Calu3 (cell line): ENCODE measurements at regions of chr11 and their contacts with region 1.

Region 1: GRCh38 chr11:41461057-41461681 is 1.7 kb upstream of the LRRC4C start:
- DNase-seq: no peak
- H3K4me3 Mint-ChIP-seq: no peak overlapping the region
- H3K27ac Mint-ChIP-seq: no peak overlapping the region
- H3K4me1 Mint-ChIP-seq: no peaks in the 10 kb centered on the region
- H3K27me3 Mint-ChIP-seq: peaks cover 8% of the 10 kb centered on the region
- CTCF ChIP-seq: peak; percentile 63

Region 2: DNA sequence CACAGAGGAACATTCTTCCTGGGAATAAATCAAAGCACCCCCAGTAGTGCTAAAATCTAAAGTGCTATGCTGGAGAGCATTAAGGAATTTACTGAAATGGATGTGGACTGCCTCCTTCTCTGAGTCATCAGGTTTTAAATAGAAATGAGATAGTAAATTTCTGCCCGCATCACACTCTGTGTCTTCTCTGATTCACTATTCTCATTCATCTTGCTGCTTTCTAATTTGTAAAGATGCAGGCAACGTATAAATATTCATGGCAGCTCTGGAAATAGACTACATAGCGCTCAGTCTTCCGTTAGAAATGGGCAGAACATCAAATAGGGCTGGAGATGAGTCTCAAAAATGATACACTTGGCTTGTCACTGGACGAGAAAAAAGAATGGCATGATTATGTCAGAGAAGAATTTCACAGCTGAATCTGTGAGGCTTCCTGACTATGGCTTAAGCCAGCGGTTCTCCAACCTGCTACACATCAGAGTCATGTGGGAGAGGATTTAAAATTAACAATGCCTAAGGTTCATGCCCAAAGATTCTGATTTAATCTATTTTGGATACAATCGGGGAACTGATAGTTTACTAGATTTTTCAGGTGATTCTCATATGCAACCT is 179.9 kb before region 1 on chr11:
- CTCF ChIA-PET with region 1: no interaction called
- intact Hi-C with region 1: no loop called
- DNase-seq: no peak
- H3K4me3 Mint-ChIP-seq: no peak overlapping the region
- H3K27ac Mint-ChIP-seq: no peak overlapping the region
- H3K4me1 Mint-ChIP-seq: no peaks in the 10 kb centered on the region
- H3K27me3 Mint-ChIP-seq: no peaks in the 10 kb centered on the region
- CTCF ChIP-seq: no peak

Region 3: DNA sequence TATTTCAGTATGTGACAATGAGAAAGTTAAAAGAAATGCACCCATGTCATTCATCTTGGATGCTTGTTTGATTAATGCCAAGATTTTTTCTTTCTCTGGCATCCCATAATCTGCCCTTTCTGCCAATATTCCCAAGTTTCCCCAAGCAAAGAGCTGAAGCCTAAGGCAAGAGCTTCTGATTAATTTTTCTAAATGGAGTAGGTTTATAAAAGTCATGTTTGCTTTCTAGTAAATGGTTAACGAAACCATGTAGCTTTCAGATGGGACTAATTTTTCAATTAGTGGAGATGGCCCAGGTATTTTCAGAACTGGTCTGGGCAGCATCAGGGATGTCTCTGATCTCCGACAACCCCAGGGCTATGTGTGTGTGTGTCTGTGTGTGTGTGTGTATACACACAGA is 57.1 kb before region 1 on chr11:
- CTCF ChIA-PET with region 1: no interaction called
- intact Hi-C with region 1: no loop called
- DNase-seq: no peak
- H3K4me3 Mint-ChIP-seq: no peak overlapping the region
- H3K27ac Mint-ChIP-seq: no peak overlapping the region
- H3K4me1 Mint-ChIP-seq: no peaks in the 10 kb centered on the region
- H3K27me3 Mint-ChIP-seq: no peaks in the 10 kb centered on the region
- CTCF ChIP-seq: no peak

Region 4: GRCh38 chr11:42524534-42525227 is 1063.5 kb after region 1 on chr11:
- CTCF ChIA-PET with region 1: no interaction called
- intact Hi-C with region 1: loop called (anchors 1 kb)
- DNase-seq: peak; percentile 57
- H3K4me3 Mint-ChIP-seq: no peak overlapping the region
- H3K27ac Mint-ChIP-seq: no peak overlapping the region
- H3K4me1 Mint-ChIP-seq: no peaks in the 10 kb centered on the region
- H3K27me3 Mint-ChIP-seq: no peaks in the 10 kb centered on the region
- CTCF ChIP-seq: peak; percentile 64